Activated CD4-positive, alpha-beta T cell treated with anti-CD3 and anti-CD28 coated beads for 36 hours (primary cell): ENCODE measurements at regions of chr1 and their contacts with region 1.

Region 1: DNA sequence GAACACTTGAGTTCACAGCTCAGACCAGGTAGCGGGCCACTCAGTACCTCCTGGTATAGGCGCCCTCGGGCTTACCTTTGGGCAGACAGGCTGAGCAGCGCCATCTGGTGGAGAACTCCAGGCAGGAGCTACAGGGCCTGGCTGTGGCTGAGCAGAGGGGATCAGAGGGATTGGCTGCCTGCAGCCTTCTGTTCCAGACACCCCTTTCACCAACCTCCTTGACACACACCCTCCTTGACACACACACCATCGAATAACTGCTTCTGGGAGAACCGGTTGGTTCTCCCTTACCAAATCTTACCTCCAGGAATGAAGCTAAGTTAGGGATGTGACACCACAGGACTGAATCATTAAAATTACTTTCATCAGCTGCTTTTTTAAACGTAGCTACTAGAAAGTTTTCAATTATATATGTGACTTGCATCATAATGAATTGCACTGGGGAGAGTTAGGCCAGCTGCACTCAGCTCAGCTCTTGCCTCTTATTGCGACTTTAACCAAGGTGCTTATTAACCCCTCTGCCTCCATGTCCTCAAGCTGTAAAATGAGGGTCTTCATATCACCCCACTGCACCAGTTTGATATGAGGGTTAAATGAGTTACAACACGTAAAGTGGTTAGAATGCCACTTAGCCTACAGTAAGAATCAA is 6.6 kb downstream of the LIN28A start:
- DNase-seq: peak; percentile 93
- ATAC-seq: peak; percentile 100
- H3K4me3 Mint-ChIP-seq: no peak overlapping the region
- H3K27ac Mint-ChIP-seq: no peak overlapping the region
- H3K4me1 Mint-ChIP-seq: no peaks in the 10 kb centered on the region
- H3K27me3 Mint-ChIP-seq: peaks cover 19% of the 10 kb centered on the region

Region 2: DNA sequence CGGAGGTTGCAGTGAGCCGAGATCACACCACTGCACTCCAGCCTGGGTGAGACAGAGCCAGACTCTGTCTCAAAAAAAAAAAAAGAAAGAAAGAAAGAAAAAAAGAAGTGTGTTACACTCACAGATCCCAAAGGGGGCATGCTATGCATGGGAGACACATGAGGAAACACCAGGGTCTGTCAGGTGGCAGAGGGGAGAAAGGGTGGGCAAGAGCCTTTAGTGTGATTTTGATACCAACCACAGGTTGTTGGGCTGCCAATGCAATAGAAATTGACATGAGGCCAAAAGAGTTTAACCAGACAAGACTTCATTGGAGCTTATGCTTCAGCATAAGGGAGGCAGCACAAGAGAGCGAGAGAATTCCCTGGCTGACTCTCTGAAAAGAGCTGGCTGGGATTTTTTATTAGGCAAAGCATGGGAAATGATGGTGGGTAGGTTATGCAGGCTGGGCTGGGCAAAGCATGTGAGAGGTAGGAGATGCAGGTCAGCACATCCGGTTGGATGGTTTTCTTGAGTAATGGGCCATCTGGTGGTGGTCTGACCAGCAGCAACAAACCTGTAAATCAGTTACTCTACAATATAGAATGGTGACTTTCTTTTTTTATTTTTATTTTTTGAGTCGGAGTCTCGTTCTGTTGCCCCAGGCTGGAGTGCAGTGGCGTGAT is 407.3 kb before region 1 on chr1:
- CTCF ChIA-PET with region 1: no interaction called
- POLR2A ChIA-PET with region 1: no interaction called
- intact Hi-C with region 1: no loop called
- DNase-seq: peak; percentile 27
- ATAC-seq: no peak
- H3K4me3 Mint-ChIP-seq: no peak overlapping the region
- H3K27ac Mint-ChIP-seq: no peak overlapping the region
- H3K4me1 Mint-ChIP-seq: no peaks in the 10 kb centered on the region
- H3K27me3 Mint-ChIP-seq: no peaks in the 10 kb centered on the region

Region 3: DNA sequence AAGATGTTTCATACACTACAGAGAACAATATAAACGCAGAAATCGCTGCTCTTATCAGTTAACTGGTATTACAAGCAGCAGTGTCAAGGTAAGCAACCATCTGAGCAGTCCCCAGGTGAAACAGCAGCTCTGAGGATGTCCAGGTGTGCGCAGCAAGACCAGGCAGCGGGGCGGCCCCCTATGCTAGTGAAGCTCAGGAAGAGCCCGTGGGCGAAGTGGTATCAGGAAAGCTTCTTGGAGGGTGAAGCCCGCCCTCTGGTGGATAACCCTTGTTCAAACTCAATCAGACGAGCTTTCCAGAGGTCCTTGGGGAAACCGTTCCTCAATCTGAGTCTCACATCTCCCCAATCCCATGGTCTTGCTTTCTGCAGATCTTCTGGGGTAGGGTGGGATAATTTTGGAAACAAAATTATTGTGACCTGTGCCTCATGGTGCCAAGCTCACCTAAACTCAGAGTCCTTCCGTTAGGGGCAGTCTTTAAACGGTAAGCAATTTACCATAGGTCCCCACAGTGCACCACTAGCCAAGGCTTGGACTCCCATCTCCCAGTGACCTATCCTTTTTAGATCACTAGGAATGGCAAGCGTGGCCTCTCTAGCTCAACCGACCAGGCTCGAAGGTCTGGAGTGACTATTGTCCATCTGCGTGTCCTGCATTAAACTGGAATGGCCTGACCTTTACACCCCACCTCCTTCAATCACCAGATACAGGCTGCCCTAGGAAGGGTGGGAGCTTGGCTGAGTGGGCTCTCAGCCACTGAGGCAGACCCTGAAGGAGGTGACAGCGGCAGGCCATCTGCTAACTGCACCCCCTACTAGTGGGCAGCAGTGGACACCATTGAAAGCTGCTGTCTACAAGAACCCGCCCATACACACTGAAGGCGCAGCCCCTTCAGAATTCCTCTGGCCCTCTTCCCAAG is 271.9 kb before region 1 on chr1:
- CTCF ChIA-PET with region 1: interaction called, 11 read pairs
- POLR2A ChIA-PET with region 1: no interaction called
- intact Hi-C with region 1: no loop called
- DNase-seq: peak; percentile 89
- ATAC-seq: peak; percentile 89
- H3K4me3 Mint-ChIP-seq: no peak overlapping the region
- H3K27ac Mint-ChIP-seq: no peak overlapping the region
- H3K4me1 Mint-ChIP-seq: peaks cover 6% of the 10 kb centered on the region
- H3K27me3 Mint-ChIP-seq: peaks cover 2% of the 10 kb centered on the region

Region 4: DNA sequence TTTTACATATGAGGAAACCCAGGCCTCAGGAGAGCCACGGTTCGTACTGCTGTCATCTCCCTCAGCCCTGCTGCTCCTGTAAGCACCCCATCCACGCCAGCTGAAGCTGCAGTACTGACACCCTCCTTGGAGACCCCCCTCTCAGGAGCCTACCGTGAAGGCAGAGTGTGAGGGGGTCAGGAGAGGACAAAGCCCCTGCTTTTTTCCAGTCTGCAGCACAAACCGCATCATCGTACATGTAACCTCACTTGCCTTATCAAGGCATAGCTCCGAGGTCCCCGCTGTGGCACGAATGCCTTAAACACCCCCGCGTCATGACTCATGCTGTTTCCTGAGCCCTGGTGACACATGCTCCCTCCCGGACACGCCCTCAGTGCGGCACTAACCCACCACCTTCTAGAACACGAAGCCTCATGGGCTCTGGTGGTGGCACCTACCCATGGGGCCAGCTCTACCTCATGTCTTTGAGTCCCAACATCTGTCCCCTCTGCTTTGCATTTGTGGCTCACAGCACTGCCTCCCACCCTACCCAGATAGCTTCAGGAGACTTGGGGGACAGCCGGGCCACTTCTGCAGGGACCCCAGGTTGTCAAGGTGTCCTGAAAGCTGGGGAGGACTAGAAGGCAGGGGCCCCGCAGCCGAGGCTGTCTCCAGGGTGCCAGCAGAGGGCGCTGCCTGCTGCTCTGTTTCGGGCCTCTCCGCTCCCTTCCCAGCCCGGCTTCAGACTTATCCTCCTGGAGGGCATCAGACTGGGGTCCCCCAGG is 132.5 kb before region 1 on chr1:
- CTCF ChIA-PET with region 1: interaction called, 15 read pairs
- POLR2A ChIA-PET with region 1: interaction called, 4 read pairs
- intact Hi-C with region 1: loop called in 1 of 2 experiments (anchors 2 kb)
- DNase-seq: peak; percentile 99
- ATAC-seq: peak; percentile 66
- H3K4me3 Mint-ChIP-seq: peak overlapping the region; percentile 61
- H3K27ac Mint-ChIP-seq: peak overlapping the region; percentile 99
- H3K4me1 Mint-ChIP-seq: peaks cover 87% of the 10 kb centered on the region
- H3K27me3 Mint-ChIP-seq: no peaks in the 10 kb centered on the region

Region 5: GRCh38 chr1:26372039-26372438 is 45.2 kb before region 1 on chr1:
- CTCF ChIA-PET with region 1: interaction called, 13 read pairs
- POLR2A ChIA-PET with region 1: no interaction called
- intact Hi-C with region 1: loop called in 1 of 2 experiments (anchors 5 kb)
- DNase-seq: no peak
- ATAC-seq: no peak
- H3K4me3 Mint-ChIP-seq: no peak overlapping the region
- H3K27ac Mint-ChIP-seq: no peak overlapping the region
- H3K4me1 Mint-ChIP-seq: peaks cover 70% of the 10 kb centered on the region
- H3K27me3 Mint-ChIP-seq: no peaks in the 10 kb centered on the region

Region 6: GRCh38 chr1:26399034-26399433 is 18.2 kb before region 1 on chr1:
- CTCF ChIA-PET with region 1: interaction called, 40 read pairs
- POLR2A ChIA-PET with region 1: no interaction called
- intact Hi-C with region 1: no loop called
- DNase-seq: no peak
- ATAC-seq: no peak
- H3K4me3 Mint-ChIP-seq: no peak overlapping the region
- H3K27ac Mint-ChIP-seq: no peak overlapping the region
- H3K4me1 Mint-ChIP-seq: peaks cover 3% of the 10 kb centered on the region
- H3K27me3 Mint-ChIP-seq: peaks cover 9% of the 10 kb centered on the region

Region 7: GRCh38 chr1:26431979-26432695 is 14.9 kb after region 1 on chr1 and contains the start of gene DHDDS:
- CTCF ChIA-PET with region 1: interaction called, 29 read pairs
- POLR2A ChIA-PET with region 1: no interaction called
- intact Hi-C with region 1: no loop called
- DNase-seq: peak; percentile 99
- ATAC-seq: peak; percentile 98
- H3K4me3 Mint-ChIP-seq: peak within 1 kb of the TSS; percentile 92
- H3K27ac Mint-ChIP-seq: peak within 1 kb of the TSS; percentile 92
- H3K4me1 Mint-ChIP-seq: peaks cover 17% of the 10 kb centered on the region
- H3K27me3 Mint-ChIP-seq: no peaks in the 10 kb centered on the region
- total RNA-seq, gene DHDDS: 34.1 to 40.7 TPM

Region 8: DNA sequence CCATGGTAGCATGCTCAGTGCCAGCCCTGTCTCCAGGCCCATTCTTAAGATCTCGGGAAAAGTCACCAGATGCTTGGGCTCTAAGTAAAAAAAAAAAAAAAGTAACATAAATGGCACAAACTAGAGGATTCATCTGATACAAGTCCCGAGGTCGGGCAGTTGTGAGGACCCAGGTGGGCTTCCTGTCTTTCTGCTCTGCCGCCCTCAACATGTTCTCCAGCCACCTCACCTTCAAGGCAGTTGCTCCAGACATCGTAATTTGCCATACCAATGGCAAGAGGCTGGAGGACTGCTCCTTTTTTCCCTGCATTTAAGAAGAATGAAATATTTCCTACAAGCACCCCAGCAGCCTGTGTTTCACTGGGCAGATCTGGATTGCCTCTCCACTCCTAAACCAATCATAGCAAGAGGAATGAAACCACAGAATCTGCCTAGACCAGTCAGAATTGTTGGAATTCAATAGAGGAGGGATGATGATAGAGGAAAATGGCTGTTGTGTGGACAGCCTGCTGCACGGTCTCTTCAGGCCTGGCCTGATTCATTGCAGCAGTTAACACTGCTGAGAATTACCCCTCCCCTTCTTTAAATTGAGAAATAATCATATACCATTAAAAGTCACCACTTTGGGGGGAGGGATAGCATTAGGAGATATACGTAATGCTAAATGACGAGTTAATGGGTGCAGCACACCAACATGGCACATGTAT is 60.4 kb after region 1 on chr1:
- CTCF ChIA-PET with region 1: no interaction called
- POLR2A ChIA-PET with region 1: no interaction called
- intact Hi-C with region 1: no loop called
- DNase-seq: no peak
- ATAC-seq: no peak
- H3K4me3 Mint-ChIP-seq: no peak overlapping the region
- H3K27ac Mint-ChIP-seq: peak overlapping the region; percentile 44
- H3K4me1 Mint-ChIP-seq: peaks cover 41% of the 10 kb centered on the region
- H3K27me3 Mint-ChIP-seq: no peaks in the 10 kb centered on the region

Region 9: DNA sequence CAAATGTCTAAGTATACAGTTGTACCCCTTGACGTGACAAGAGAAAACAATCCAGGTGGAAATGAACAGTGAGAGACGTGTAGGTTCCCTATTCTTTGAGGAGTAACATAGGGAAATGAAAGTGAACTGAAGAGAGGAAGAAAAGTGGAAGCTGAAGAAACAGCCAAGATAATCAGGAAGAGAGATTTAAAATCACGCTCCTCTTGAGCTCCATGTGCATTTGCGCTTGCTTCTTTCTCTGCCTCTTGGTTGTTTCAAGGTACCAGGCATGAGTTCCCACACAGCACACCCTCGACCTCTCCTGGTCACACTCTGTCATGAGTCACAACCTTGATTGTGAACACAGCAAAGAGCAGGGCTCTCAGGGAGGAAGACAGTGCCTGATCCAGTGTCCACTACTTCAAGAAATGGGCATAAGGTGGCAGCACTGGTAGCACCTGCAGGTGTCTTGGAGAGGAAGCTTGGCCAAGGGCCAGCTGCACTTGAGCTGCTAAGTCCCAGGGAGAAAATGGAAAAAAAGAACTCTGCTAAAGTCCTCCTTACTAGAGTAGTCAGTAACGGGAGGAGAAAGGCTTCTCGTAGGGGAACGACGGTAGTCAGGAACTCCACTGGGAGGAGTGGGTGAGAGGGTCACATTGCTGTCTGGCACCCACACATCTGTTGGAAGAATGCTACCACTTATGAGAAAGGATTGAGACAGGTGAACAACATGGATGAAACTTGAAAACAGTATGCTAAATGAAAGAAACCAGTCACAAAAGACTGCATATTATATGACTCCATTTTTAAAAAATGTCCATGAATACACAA is 260.3 kb after region 1 on chr1:
- CTCF ChIA-PET with region 1: no interaction called
- POLR2A ChIA-PET with region 1: no interaction called
- intact Hi-C with region 1: no loop called
- DNase-seq: peak; percentile 74
- ATAC-seq: peak; percentile 100
- H3K4me3 Mint-ChIP-seq: peak overlapping the region; percentile 1
- H3K27ac Mint-ChIP-seq: peak overlapping the region; percentile 48
- H3K4me1 Mint-ChIP-seq: peaks cover 15% of the 10 kb centered on the region
- H3K27me3 Mint-ChIP-seq: no peaks in the 10 kb centered on the region